Mammary epithelial cell (primary cell): ENCODE measurements at regions of chr17 and their contacts with region 1.

Region 1: DNA sequence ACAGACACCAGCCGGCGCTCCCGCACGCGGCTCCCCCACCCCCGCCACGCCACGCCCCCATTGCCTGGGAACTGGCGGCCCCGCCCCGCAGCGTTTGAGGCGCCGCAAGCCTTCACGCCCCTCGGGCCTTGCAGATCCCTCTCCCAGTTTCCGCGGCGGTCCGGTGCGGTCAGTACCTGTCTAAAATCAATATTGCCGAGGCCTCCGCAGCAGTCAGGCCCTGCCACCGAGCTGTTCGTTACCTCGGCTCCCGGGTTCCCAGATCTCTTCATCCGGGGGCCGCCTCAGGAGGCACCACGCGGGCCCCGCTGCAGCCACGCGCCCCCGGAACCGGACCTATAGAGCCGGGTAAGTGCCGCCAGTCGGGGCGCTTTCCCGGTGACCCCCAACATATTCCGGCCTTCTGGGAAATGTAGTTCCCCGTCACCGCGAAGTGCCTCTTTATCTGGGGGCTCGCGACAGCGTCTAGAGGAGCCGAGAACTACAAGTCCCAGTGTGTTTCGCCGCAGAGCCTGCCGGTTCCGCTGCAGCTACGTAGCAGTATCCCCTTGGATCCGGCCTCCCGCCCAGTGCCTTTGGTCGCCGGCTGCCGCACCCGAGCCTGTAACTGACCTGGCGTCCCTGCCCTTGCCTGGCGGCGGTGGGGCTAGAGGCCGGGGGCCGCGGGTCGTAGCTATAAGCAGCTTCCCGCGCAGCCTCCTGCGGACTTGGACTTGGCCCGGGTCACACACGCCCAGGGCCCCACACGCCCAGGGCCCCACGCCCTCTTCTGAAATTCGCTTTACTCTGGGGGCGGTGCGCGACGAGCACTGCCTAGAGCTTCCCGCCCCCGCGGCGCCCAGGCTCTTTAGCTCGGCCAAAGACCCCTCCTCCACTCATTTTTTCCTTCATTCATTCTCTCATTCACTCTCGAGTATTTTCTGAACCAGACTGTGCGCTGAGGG is at the start of gene PEMT:
- DNase-seq: peak; percentile 96
- H3K4me3 ChIP-seq: peak within 1 kb of the TSS; percentile 82 to 92 (median 85)
- H3K27ac ChIP-seq: peak within 1 kb of the TSS; percentile 73
- H3K4me1 ChIP-seq: peaks cover 9% of the 10 kb centered on the region
- H3K27me3 ChIP-seq: no peaks in the 10 kb centered on the region
- CTCF ChIP-seq: no peak
- total RNA-seq, gene PEMT: 31.0 to 34.5 TPM

Region 2: GRCh38 chr17:17280613-17281549 is 310.7 kb before region 1 on chr17 and contains the start of gene COPS3:
- CTCF ChIA-PET with region 1: no interaction called
- dilution Hi-C with region 1: no loop called
- in situ Hi-C with region 1: no loop called
- intact Hi-C with region 1: loop called (anchors 1 kb)
- DNase-seq: peak; percentile 95
- H3K4me3 ChIP-seq: peak within 1 kb of the TSS; percentile 92 to 98 (median 96)
- H3K27ac ChIP-seq: peak within 1 kb of the TSS; percentile 95
- H3K4me1 ChIP-seq: peaks cover 15% of the 10 kb centered on the region
- H3K27me3 ChIP-seq: no peaks in the 10 kb centered on the region
- CTCF ChIP-seq: peak in 1 of 2 donors; percentile 4
- total RNA-seq, gene COPS3: 69.5 to 74.2 TPM

Region 3: DNA sequence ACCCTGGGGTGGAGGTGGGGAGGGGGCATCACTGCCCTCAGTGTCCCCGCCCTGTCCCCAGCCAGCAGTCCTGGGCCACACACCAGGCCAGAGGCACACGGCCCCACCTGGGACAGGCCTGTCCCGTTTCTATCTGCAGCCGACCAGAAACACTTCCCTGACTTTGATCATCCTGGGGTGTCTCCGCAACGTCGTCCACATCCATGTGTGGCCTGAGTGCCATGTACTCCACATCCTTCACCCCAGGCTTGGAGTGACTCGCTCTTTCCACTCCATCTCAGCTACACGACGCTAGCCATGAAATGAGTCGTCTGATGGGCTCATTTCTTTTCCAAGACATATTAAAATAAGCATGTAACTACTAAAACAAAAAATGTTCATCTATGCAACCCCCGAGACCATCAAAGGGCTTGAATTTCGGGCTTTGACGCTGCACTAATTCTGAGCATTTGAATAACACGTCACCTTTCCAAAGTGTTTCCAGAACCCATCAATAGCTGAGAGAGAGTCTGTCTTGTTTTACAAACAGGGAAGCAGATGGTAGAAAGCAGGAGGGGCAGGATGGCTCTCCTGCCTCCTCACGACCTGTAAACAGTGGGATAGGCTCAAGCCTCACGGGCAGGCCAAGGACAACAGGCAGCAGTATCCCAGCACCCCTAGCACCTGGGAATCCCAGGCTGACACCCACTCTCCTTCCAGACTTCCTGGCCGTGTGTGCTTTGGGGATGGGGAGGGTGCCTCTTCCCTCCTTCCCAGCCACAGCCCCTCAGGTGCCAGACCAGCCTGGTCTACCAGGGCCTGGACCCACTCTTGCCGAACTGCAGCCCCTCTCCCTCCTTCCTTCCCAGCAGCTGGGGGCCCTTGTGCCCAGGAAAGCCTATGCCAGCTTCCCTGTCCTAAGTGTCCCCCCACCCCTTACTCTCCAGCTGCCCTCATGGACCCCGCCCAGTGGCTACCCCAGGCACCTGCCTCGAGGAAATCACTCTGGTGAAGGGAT is 75.4 kb before region 1 on chr17:
- CTCF ChIA-PET with region 1: no interaction called
- dilution Hi-C with region 1: loop called (anchors 5 kb)
- in situ Hi-C with region 1: no loop called
- intact Hi-C with region 1: no loop called
- DNase-seq: peak; percentile 18
- H3K4me3 ChIP-seq: no peak overlapping the region
- H3K27ac ChIP-seq: no peak overlapping the region
- H3K4me1 ChIP-seq: peaks cover 11% of the 10 kb centered on the region
- H3K27me3 ChIP-seq: peaks cover 10% of the 10 kb centered on the region
- CTCF ChIP-seq: no peak

Region 4: GRCh38 chr17:17568749-17569195 is 22.9 kb before region 1 on chr17:
- CTCF ChIA-PET with region 1: no interaction called
- dilution Hi-C with region 1: no loop called
- in situ Hi-C with region 1: no loop called
- intact Hi-C with region 1: no loop called
- DNase-seq: peak; percentile 28
- H3K4me3 ChIP-seq: no peak overlapping the region
- H3K27ac ChIP-seq: no peak overlapping the region
- H3K4me1 ChIP-seq: no peaks in the 10 kb centered on the region
- H3K27me3 ChIP-seq: no peaks in the 10 kb centered on the region
- CTCF ChIP-seq: peak; percentile 75 to 92

Region 5: DNA sequence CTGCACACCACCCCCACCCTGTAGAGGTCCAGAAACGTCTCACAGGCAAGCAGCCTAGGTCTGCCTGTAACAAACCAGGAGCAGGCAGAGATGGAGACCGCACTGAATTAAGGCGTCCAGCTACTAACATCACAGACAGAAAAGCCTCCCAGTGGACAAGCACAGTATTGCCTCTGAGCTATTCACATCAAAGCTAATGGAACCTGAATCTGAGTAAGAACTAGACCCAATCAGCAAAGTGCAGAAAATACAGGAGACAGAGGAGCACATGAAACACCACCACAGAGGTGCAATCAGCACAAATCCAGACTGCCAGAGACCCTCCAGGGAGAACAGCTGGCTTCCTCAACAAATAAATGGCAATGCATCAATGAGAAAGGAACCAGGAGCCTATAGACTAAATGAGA is 22.1 kb after region 1 on chr17:
- CTCF ChIA-PET with region 1: interaction called, 6 read pairs
- dilution Hi-C with region 1: no loop called
- in situ Hi-C with region 1: no loop called
- intact Hi-C with region 1: loop called (anchors 1 kb)
- DNase-seq: peak; percentile 62
- H3K4me3 ChIP-seq: no peak overlapping the region
- H3K27ac ChIP-seq: no peak overlapping the region
- H3K4me1 ChIP-seq: no peaks in the 10 kb centered on the region
- H3K27me3 ChIP-seq: no peaks in the 10 kb centered on the region
- CTCF ChIP-seq: peak; percentile 78 to 90

Region 6: GRCh38 chr17:17628388-17629008 is 36.9 kb after region 1 on chr17:
- CTCF ChIA-PET with region 1: no interaction called
- dilution Hi-C with region 1: no loop called
- in situ Hi-C with region 1: no loop called
- intact Hi-C with region 1: no loop called
- DNase-seq: no peak
- H3K4me3 ChIP-seq: no peak overlapping the region
- H3K27ac ChIP-seq: no peak overlapping the region
- H3K4me1 ChIP-seq: peaks cover 6% of the 10 kb centered on the region
- H3K27me3 ChIP-seq: no peaks in the 10 kb centered on the region
- CTCF ChIP-seq: no peak